Dorsolateral prefrontal cortex (tissue), 120 donors: ENCODE measurements at regions of chr22 and their contacts with region 1.

Region 1: DNA sequence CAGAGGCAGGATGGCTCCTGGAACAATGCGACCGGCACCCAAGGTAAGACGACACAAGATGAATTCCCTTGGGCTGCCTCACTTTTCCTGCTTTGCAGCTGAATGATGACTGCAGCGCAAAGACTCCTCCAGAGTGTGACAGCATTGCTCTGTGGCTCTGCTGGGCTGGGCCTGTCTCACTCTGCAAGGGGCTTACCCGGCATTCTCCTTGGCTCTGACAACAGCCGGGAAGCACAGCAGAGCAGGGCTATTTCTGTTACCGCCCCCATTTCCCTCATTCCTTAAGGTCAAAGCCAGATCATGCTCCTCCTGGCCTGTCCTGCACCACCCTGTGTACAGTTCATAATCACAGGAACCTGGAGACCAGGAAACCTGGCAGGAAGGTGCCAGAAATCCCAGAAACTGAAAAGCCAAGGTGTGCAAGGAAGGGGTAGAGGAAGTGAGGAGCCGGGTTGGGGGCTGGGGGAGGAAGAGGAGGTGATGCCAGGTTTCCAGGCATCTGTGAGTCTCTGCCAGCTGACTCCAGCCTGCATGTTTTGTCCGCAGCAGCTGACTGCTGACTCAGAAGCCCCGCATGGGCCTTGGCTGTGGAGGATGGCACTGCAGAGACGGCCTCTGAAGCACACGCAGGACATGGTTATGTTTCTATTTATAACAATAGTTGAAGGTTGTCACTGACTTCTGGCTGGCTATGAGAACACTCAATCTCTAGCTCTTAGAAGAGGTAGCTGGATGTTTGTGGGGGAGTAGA is 113.6 kb downstream of the MICAL3 start:
- DNase-seq: peak; percentile 60 to 93 (median 82)
- H3K4me3 ChIP-seq: peak overlapping the region in 33 of 59 donors; percentile 1 to 42 (median 17)
- H3K27ac ChIP-seq: peak overlapping the region; percentile 53 to 98 (median 94)
- H3K27me3 ChIP-seq: no peaks in the 10 kb centered on the region
- CTCF ChIP-seq: peak in 53 of 56 donors; percentile 9 to 66 (median 49)

Region 2: GRCh38 chr22:17829695-17830042 is 81.1 kb before region 1 on chr22:
- intact Hi-C with region 1: no loop called
- DNase-seq: no peak
- H3K4me3 ChIP-seq: no peak overlapping the region
- H3K27ac ChIP-seq: peak overlapping the region in 49 of 59 donors; percentile 1 to 88 (median 76)
- H3K27me3 ChIP-seq: no peaks in the 10 kb centered on the region
- CTCF ChIP-seq: no peak

Region 3: DNA sequence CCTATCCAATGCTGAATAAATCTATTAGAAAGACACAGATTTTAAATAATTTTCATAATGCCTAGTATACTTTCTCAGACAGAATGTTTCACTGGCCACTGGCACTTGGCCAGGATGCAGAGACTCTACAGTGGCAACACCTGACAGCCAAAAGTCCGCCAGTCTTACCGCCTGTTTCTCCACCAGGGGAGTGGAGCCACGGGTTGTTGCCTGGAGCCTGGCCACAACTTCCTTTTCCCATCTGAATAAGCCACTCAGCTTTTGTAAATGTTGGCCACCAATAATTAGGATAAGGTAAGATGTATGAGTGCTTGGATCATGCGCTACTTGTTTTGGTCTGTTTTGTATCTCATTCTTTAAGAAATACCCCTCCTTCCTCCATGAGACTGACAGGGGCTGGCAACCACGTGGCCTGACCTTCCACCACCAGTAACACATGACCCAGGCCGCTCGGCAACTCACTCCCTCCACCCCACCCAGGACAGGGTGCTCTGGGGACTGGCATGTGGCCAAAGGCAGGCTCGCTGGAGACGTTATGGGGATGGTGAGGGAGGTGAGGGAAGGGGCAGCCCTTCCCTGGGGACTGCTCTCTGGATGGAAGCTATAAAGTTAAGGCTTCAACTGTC is 43.5 kb before region 1 on chr22:
- intact Hi-C with region 1: loop called in 1 of 2 experiments (anchors 5 kb)
- DNase-seq: peak in 4 of 10 donors; percentile 41 to 57 (median 56)
- H3K4me3 ChIP-seq: peak overlapping the region in 1 of 59 donors; percentile 8
- H3K27ac ChIP-seq: peak overlapping the region; percentile 1 to 99 (median 97)
- H3K27me3 ChIP-seq: no peaks in the 10 kb centered on the region
- CTCF ChIP-seq: peak in 5 of 56 donors; percentile 8 to 26 (median 20)

Region 4: GRCh38 chr22:17945888-17946648 is 35.3 kb after region 1 on chr22:
- intact Hi-C with region 1: loop called in 1 of 2 experiments (anchors 5 kb)
- DNase-seq: peak in 3 of 10 donors; percentile 39 to 65 (median 43)
- H3K4me3 ChIP-seq: peak overlapping the region in 16 of 59 donors; percentile 2 to 35 (median 14)
- H3K27ac ChIP-seq: peak overlapping the region in 50 of 59 donors; percentile 2 to 92 (median 54)
- H3K27me3 ChIP-seq: no peaks in the 10 kb centered on the region
- CTCF ChIP-seq: peak in 2 of 56 donors; percentile 4 to 12

Region 5: DNA sequence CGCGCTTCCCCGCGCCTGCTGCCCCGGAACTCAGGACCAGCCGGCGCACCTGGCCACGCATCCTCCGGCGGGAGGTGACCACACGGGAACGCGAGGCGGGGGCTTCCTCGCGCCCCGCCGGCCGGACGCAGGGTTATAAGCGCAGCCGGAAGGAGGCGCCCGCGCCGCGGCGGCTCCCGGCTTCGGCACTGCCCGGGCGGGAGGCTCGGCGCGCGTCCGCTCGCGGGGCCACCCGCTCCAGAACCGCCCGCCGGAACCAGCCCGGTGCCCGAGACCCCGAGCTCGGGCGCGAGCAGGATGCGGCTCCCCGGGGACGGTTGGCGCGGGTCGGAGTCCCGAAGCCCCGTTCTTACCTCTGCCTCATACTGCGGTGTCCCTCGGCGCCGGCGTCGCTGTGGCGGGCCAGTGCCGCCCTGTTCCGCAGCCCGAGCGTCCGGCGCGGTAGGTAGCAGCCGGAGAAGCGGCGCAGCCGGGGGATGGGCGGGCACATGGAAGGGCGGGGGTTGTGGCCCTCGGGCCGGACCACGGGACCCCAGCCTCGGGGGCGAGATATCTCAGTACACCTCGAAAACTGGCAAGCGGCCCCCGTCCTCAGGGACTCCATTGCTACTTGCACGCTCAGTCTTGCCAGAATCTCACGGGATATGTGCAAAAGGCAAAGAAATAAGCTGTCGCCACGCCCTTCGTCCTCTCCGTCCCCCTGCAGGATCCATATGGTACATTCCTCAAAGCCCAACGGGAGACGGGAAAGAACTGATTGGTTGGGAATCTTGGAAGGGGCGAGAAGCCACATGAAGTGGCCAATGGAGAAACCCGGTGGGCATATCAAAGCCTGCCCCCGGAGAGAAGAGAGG is 90.5 kb after region 1 on chr22:
- intact Hi-C with region 1: loop called (anchors 2 to 5 kb)
- DNase-seq: peak; percentile 82 to 92 (median 89)
- H3K4me3 ChIP-seq: peak overlapping the region; percentile 56 to 96 (median 83)
- H3K27ac ChIP-seq: peak overlapping the region; percentile 76 to 99 (median 97)
- H3K27me3 ChIP-seq: no peaks in the 10 kb centered on the region
- CTCF ChIP-seq: peak in 52 of 56 donors; percentile 12 to 79 (median 48)

Region 6: DNA sequence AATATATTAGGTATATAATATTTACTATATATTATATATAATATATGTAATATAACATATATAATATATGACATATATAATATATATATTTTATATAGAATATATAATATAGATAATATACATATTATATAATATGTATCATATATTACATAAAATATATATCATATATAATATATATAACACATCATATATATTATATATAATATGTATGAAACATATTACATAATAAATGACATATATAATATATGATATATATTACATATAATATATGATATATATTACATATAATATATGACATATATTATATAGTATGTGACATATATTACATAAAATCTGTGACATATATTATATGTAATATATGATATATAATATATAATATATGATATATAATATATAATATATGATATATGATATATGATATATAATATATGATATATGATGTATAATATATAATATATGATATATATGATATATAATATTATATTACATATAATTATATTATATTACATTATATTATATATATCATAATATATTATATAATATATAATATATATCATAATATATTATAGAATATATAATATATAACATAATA is 820.4 kb after region 1 on chr22:
- intact Hi-C with region 1: no loop called
- DNase-seq: no peak
- H3K4me3 ChIP-seq: no peak overlapping the region
- H3K27ac ChIP-seq: no peak overlapping the region
- H3K27me3 ChIP-seq: no peaks in the 10 kb centered on the region
- CTCF ChIP-seq: no peak